H1 (cell line): ENCODE measurements at regions of chr9 and their contacts with region 1.

Region 1: DNA sequence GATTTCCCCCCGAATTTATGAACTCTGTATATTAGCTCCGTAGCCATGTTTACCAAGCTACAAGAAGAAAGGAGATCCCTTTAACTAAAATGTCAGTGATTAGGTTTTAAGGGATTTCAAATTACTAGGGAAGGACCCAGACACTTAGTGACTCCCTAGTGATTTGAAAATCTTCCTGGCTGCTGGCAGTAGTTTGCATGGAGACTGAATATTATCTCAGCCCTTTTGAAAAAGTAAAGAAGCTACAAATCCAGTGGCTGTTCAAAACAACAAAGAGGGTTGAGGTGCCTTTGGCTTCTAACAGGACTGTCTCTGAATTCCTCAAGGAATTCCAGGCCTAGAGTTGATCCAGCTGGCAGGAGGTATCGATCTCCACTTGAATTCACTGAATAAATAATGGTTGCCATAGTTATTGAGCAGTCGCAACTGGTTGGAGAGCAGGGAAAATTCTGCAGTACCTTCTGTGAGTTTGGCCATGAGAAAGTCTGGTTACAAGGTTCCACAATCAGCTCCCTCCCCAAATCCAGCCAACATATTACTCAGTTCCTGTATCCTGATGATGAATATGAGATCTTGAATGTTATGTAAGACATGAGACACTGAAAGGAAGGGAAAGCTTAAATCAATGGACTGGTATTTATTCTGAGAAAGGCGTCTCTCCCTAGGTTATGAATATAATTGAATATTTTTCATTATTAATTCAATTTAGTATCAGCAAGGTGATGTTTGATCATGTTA is 37.7 kb downstream of the NR4A3 start:
- DNase-seq: peak in 1 of 2 experiments; percentile 7
- H3K4me3 ChIP-seq: no peak overlapping the region; a peak in 1 of 8 replicates
- H3K27ac ChIP-seq: no peak overlapping the region
- H3K4me1 ChIP-seq: peaks cover 0 to 5% (median 4%) of the 10 kb centered on the region in 4 experiments; a peak in 3 of 7 replicates
- H3K27me3 ChIP-seq: no peaks in the 10 kb centered on the region
- CTCF ChIP-seq: no peak
- EP300 ChIP-seq: no peak
- POLR2A ChIP-seq: no peak
- RAD21 ChIP-seq: no peak

Region 2: GRCh38 chr9:99748266-99748665 is 111.1 kb before region 1 on chr9:
- CTCF ChIA-PET with region 1: no interaction called
- POLR2A ChIA-PET with region 1: no interaction called
- DNase-seq: no peak
- H3K4me3 ChIP-seq: no peak overlapping the region
- H3K27ac ChIP-seq: no peak overlapping the region
- H3K4me1 ChIP-seq: peaks cover 0 to 4% (median 0%) of the 10 kb centered on the region in 4 experiments; a peak in 2 of 7 replicates
- H3K27me3 ChIP-seq: no peaks in the 10 kb centered on the region
- CTCF ChIP-seq: no peak
- EP300 ChIP-seq: no peak
- POLR2A ChIP-seq: no peak
- RAD21 ChIP-seq: no peak

Region 3: GRCh38 chr9:99778308-99778707 is 81.1 kb before region 1 on chr9:
- CTCF ChIA-PET with region 1: no interaction called
- POLR2A ChIA-PET with region 1: no interaction called
- DNase-seq: no peak
- H3K4me3 ChIP-seq: no peak overlapping the region
- H3K27ac ChIP-seq: no peak overlapping the region
- H3K4me1 ChIP-seq: peaks cover 0 to 3% (median 0%) of the 10 kb centered on the region in 4 experiments; a peak in 1 of 7 replicates
- H3K27me3 ChIP-seq: no peaks in the 10 kb centered on the region
- CTCF ChIP-seq: no peak
- EP300 ChIP-seq: no peak
- POLR2A ChIP-seq: no peak
- RAD21 ChIP-seq: no peak

Region 4: GRCh38 chr9:99824378-99825171 is 34.8 kb before region 1 on chr9:
- CTCF ChIA-PET with region 1: interaction called, 19 read pairs
- POLR2A ChIA-PET with region 1: interaction called, 3 read pairs
- DNase-seq: peak in 1 of 2 experiments; percentile 93
- H3K4me3 ChIP-seq: peak overlapping the region; percentile 58 to 68 (median 66)
- H3K27ac ChIP-seq: no peak overlapping the region
- H3K4me1 ChIP-seq: peaks cover 0 to 35% (median 18%) of the 10 kb centered on the region in 4 experiments; a peak in 6 of 7 replicates
- H3K27me3 ChIP-seq: peaks cover 65 to 95% (median 90%) of the 10 kb centered on the region in 4 experiments
- CTCF ChIP-seq: peak in 2 of 3 experiments; percentile 68 to 78; a peak in 3 of 4 replicates
- EP300 ChIP-seq: no peak
- POLR2A ChIP-seq: peak in 1 of 2 experiments; percentile 39; a peak in 1 of 3 replicates
- RAD21 ChIP-seq: peak; percentile 80 to 83

Region 5: GRCh38 chr9:99840072-99840471 is 19.3 kb before region 1 on chr9:
- CTCF ChIA-PET with region 1: interaction called, 31 read pairs
- POLR2A ChIA-PET with region 1: no interaction called
- DNase-seq: no peak
- H3K4me3 ChIP-seq: no peak overlapping the region
- H3K27ac ChIP-seq: no peak overlapping the region
- H3K4me1 ChIP-seq: no peaks in the 10 kb centered on the region
- H3K27me3 ChIP-seq: no peaks in the 10 kb centered on the region
- CTCF ChIP-seq: no peak
- EP300 ChIP-seq: no peak
- POLR2A ChIP-seq: no peak
- RAD21 ChIP-seq: no peak